K562 (cell line): ENCODE measurements at regions of chr7 and their contacts with region 1.

Region 1: GRCh38 chr7:105118612-105119600 is 104.9 kb downstream of the KMT2E start:
- DNase-seq: no peak
- ATAC-seq: no peak
- H3K4me3 ChIP-seq: no peak overlapping the region
- H3K27ac ChIP-seq: no peak overlapping the region
- H3K4me1 ChIP-seq: no peaks in the 10 kb centered on the region
- H3K27me3 ChIP-seq: no peaks in the 10 kb centered on the region
- CTCF ChIP-seq: no peak
- EP300 ChIP-seq: no peak
- POLR2A ChIP-seq: no peak
- RAD21 ChIP-seq: no peak

Region 2: DNA sequence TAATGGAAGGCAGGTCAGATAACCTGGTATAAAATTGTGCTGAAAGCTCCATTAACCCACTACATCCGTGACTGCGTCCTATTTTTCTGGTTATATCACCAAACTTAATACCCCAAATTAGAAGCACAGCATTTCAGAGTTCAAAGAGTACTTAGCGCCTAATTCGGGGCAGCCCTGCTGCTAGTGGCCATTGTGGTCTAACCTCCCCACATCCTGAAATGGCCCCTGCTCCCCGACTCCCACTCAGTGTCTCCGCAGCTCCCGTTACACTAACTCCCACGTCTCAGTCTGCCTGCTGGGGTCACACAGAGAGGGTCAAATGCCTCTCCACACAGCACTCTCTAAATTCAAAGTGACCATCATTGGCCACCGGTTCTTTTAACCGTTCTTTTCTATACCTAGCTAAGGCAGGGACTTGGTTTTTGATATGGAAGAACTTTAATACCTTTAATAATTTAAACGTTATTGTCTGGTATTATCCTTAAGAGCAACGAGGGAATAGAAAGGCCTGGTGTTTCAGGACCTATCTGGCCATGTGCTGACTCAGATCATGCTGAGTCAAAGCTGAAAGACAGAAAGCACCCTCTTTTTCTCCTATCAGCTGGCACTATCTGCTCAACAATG is 12.2 kb after region 1 on chr7:
- CTCF ChIA-PET with region 1: no interaction called
- POLR2A ChIA-PET with region 1: interaction called, 19 read pairs
- in situ Hi-C with region 1: no loop called
- intact Hi-C with region 1: no loop called
- DNase-seq: peak; percentile 80 to 87 (median 84)
- ATAC-seq: peak; percentile 90
- H3K4me3 ChIP-seq: no peak overlapping the region
- H3K27ac ChIP-seq: peak overlapping the region; percentile 76
- H3K4me1 ChIP-seq: peaks cover 13 to 25% of the 10 kb centered on the region in 2 experiments
- H3K27me3 ChIP-seq: no peaks in the 10 kb centered on the region
- CTCF ChIP-seq: no peak
- EP300 ChIP-seq: peak; percentile 52; the same call in 1 of the 2 replicates
- POLR2A ChIP-seq: peak; percentile 38; the same call in 1 of the 2 replicates
- RAD21 ChIP-seq: no peak

Region 3: DNA sequence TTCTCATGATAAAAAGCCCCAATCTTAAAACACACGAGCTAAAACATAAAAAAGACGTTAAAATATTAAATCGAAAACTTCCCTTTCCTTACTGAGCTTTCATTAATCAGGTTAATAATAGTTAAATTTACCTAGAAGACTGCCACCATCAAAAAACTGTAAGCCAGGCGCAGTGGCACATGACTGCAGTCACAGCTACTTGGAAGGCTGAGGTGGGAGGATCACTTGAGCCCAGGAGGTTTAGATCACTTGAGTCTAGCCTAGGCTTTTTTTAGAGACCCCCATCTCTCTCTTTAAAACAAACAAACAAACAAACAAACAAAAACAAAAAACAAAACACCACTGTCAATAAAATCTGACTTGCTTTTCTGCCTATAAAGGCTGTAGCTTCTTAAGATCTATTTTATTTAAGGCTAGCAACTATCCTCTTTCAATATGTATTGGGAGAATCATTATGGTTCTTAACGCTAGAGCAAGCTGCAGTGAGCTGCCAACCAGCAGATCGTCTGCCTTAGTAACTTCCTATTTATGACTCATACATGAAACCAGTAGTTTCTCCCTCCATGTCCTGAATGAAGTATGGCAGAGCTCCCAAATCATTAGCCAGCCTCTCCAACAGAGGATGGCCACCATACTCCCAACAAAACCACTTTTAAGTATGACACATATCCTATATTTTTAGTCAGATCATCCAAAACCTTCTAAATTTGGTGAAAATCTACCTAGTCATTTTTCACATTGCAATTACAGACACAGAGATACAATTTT is 106.2 kb after region 1 on chr7:
- CTCF ChIA-PET with region 1: no interaction called
- POLR2A ChIA-PET with region 1: no interaction called
- in situ Hi-C with region 1: no loop called
- intact Hi-C with region 1: no loop called
- DNase-seq: peak in 2 of 4 experiments; percentile 41 to 73
- ATAC-seq: peak; percentile 85
- H3K4me3 ChIP-seq: no peak overlapping the region
- H3K27ac ChIP-seq: peak overlapping the region; percentile 62; the same call in 2 of the 3 replicates
- H3K4me1 ChIP-seq: peaks cover 7 to 16% of the 10 kb centered on the region in 2 experiments
- H3K27me3 ChIP-seq: no peaks in the 10 kb centered on the region
- CTCF ChIP-seq: no peak; a peak in 1 of 6 replicates
- EP300 ChIP-seq: no peak
- POLR2A ChIP-seq: no peak
- RAD21 ChIP-seq: no peak